Kidney (tissue), 22 donors: ENCODE measurements at regions of chr22 and their contacts with region 1.

Region 1: GRCh38 chr22:30754971-30755756 is 60.5 kb downstream of the OSBP2 start:
- DNase-seq: peak in 4 of 5 donors; percentile 59 to 84 (median 68)
- H3K4me3 ChIP-seq: no peak overlapping the region
- H3K27ac ChIP-seq: no peak overlapping the region
- H3K4me1 ChIP-seq: peaks cover 0 to 7% (median 0%) of the 10 kb centered on the region in 3 donors
- H3K27me3 ChIP-seq: no peaks in the 10 kb centered on the region
- CTCF ChIP-seq: peak; percentile 66

Region 2: GRCh38 chr22:30628491-30628890 is 126.7 kb before region 1 on chr22:
- intact Hi-C with region 1: loop called (anchors 10 kb)
- DNase-seq: no peak
- H3K4me3 ChIP-seq: no peak overlapping the region
- H3K27ac ChIP-seq: no peak overlapping the region
- H3K4me1 ChIP-seq: no peaks in the 10 kb centered on the region
- H3K27me3 ChIP-seq: no peaks in the 10 kb centered on the region
- CTCF ChIP-seq: no peak

Region 3: DNA sequence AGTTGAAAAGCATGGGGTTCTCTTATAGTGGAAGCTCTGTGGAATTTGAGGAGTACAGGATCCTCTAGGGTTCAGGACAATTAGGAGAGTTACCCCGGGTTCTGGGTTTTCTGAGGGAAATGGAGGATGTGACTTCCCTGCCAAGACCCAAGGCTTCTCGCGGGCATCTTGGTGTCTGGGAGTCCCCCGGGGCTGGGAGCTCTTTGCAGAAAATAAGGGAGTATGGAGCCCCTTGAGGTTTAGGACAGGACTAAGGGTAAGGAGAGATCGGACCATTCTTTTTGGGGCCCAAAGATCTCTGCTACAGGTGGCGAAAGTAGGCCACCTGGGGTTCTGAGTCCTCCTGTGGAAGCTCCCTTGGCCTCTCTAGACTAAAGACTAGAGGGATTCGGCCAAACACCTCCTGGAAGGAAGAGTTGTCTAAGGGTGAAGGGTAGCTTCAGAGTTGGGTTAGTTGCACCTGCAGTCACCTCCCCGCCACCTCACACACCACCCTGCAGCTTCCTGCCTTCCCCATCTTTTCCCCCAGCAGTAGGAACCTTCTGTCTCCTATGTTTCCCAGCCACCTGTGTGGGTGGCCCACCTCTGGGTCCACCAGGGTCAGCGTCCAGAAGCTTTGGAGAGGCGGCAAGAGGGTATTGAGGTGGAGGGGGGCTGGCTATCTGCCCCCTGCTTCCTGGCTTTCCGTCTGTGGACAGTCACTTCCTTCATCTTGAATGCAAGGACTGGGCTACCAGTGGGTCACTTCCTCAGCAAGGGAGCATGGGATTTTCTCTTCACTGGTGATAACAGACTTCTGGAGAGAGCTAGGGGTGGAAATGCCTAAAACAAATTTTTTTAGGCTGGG is 457.8 kb after region 1 on chr22:
- intact Hi-C with region 1: no loop called
- DNase-seq: no peak
- H3K4me3 ChIP-seq: peak overlapping the region; percentile 68 to 86 (median 83)
- H3K27ac ChIP-seq: peak overlapping the region; percentile 72
- H3K4me1 ChIP-seq: peaks cover 0 to 20% (median 7%) of the 10 kb centered on the region in 3 donors
- H3K27me3 ChIP-seq: no peaks in the 10 kb centered on the region
- CTCF ChIP-seq: no peak